ENCODE measurements at regions of chr19 and their contacts with region 1.

Region 1: GRCh38 chr19:54017261-54017660 is 25.8 kb downstream of the CACNG6 start:
- DNase-seq: no peak
- H3K4me3 ChIP-seq: no peak overlapping the region
- H3K27ac ChIP-seq: no peak overlapping the region
- H3K4me1 ChIP-seq: peaks cover 9% of the 10 kb centered on the region
- H3K27me3 ChIP-seq: no peaks in the 10 kb centered on the region
- CTCF ChIP-seq: no peak
- POLR2A ChIP-seq: no peak

Region 2: DNA sequence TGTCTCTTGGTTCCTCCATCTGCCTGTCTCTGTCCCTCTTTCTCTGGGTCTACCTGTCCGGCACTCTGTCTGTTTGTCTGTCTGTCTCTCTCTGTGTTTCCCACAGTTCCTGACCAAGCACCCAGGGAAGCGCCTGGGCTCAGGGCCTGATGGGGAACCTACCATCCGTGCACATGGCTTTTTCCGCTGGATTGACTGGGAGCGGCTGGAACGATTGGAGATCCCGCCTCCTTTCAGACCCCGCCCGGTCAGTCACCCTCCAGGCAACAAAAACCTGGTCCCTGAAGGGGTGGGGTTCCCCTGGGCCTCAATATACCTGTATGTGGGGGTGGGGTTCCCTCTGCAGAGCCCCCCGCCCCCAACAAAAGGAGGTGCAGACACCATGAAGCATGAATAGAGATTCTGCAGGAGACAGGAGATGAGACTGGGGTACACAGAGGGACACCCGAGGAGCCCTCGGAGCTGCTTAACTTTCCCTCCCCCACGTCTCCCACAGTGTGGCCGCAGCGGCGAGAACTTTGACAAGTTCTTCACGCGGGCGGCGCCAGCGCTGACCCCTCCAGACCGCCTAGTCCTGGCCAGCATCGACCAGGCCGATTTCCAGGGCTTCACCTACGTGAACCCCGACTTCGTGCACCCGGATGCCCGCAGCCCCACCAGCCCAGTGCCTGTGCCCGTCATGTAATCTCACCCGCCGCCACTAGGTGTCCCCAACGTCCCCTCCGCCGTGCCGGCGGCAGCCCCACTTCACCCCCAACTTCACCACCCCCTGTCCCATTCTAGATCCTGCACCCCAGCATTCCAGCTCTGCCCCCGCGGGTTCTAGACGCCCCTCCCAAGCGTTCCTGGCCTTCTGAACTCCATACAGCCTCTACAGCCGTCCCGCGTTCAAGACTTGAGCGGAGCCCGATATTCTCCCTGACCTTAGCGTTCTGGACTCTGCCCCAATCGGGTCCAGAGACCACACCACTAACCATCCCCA is 110.8 kb before region 1 on chr19:
- CTCF ChIA-PET with region 1: no interaction called
- POLR2A ChIA-PET with region 1: no interaction called
- dilution Hi-C with region 1: no loop called
- intact Hi-C with region 1: loop called (anchors 1 kb)
- DNase-seq: no peak
- H3K4me3 ChIP-seq: no peak overlapping the region
- H3K27ac ChIP-seq: no peak overlapping the region
- H3K4me1 ChIP-seq: peaks cover 6% of the 10 kb centered on the region
- H3K27me3 ChIP-seq: peaks cover 31 to 35% of the 10 kb centered on the region in 2 experiments
- CTCF ChIP-seq: peak; percentile 77 to 93
- POLR2A ChIP-seq: no peak

Region 3: DNA sequence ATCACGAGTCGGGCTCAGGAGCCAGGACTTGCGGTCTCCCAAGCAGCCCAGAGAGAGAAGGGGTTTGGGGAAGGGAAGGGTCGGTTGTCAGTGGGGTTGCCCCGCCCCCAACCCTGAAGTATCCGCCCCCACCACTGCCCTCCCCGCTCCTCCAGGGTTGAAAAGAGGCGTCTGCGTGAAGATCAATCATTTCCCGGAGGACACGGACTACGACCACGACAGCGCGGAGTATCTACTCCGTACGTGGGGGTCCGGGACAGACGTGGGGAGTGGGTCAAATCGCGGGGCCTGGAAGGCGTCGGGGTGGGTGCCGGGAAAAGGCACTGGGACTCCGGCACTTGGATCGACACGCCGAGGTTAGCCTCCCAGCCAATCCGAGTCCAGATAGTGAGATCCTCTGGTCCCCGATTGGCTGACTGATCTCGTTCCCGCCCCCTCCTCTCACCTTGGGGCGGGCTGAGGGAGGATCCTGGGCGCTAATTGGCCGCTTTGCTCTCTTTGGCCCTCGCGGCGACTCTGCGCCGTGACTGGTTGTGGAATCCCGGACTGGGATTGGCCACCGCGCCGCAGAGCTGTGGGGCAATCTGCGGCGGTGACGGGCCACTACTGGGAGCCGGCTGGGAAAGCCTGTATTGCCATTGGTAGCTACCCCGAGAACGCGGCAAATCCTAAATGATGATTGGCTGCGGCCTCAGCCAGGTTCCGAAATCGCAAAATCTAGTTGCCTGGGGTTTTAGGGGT is 39.1 kb before region 1 on chr19:
- CTCF ChIA-PET with region 1: interaction called, 3 read pairs
- POLR2A ChIA-PET with region 1: no interaction called
- dilution Hi-C with region 1: no loop called
- intact Hi-C with region 1: loop called (anchors 1 kb)
- DNase-seq: peak; percentile 94
- H3K4me3 ChIP-seq: peak overlapping the region in 1 of 3 experiments; percentile 30
- H3K27ac ChIP-seq: no peak overlapping the region
- H3K4me1 ChIP-seq: peaks cover 19% of the 10 kb centered on the region
- H3K27me3 ChIP-seq: no peaks in the 10 kb centered on the region
- CTCF ChIP-seq: no peak
- POLR2A ChIP-seq: no peak

Region 4: DNA sequence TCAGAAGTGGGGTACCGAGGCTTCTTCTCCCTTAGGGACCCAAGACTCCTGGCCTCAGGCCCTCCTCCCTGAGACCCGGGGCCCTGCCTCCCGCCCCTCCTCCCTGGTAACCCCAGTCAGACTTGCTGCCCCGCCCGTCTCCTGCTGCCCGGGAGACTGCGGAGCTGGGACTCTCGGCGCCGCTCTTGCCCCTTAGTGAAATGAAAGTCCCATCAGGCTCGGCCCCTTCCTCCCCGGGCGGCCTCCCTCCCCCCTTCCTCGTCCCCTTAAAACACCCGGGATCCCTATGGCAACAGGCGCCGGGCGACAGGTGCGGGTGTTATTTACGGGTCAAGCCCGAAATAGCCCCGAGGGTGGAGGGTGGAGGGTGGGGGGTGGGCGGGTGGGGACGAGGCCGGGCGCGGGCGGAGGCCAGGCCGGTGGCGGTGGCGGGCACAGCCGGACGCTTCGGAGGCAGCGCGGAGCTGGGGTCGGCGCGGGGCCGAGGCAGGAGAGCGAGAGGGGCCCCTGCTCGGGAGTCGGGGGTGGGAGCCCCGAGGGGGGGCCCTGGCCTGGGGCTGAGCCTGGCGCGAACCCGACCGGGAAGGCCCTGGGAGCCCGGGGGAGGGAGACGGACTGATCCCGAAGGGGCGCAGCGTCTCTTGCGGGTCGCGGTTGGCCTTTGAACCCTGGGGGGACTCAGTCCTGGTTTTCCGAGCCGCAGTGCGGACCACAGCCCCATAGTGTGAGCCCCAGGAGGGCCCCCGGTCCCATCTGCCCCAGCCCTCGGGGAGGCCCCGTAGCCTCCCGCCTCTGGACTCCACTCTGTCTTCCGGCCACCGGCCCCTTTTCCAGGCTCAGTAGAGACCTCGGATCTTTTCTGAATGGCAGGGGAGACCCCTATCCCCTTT is 25.8 kb before region 1 on chr19 and contains the start of gene CACNG6:
- CTCF ChIA-PET with region 1: no interaction called
- POLR2A ChIA-PET with region 1: interaction called, 4 read pairs
- dilution Hi-C with region 1: no loop called
- intact Hi-C with region 1: loop called (anchors 1 kb)
- DNase-seq: peak; percentile 56
- H3K4me3 ChIP-seq: peak within 1 kb of the TSS; percentile 15 to 26 (median 25)
- H3K27ac ChIP-seq: peak within 1 kb of the TSS; percentile 74
- H3K4me1 ChIP-seq: peaks cover 39% of the 10 kb centered on the region
- H3K27me3 ChIP-seq: no peaks in the 10 kb centered on the region
- CTCF ChIP-seq: no peak
- POLR2A ChIP-seq: peak; percentile 38
- total RNA-seq, gene CACNG6: 4.0 and 5.4 TPM in 2 replicates

Region 5: GRCh38 chr19:54035215-54036178 is 18.2 kb after region 1 on chr19:
- CTCF ChIA-PET with region 1: interaction called, 8 read pairs
- POLR2A ChIA-PET with region 1: no interaction called
- dilution Hi-C with region 1: no loop called
- intact Hi-C with region 1: loop called (anchors 1 kb)
- DNase-seq: peak; percentile 86
- H3K4me3 ChIP-seq: no peak overlapping the region
- H3K27ac ChIP-seq: peak overlapping the region; percentile 68
- H3K4me1 ChIP-seq: peaks cover 16% of the 10 kb centered on the region
- H3K27me3 ChIP-seq: no peaks in the 10 kb centered on the region
- CTCF ChIP-seq: no peak
- POLR2A ChIP-seq: no peak

Measured in endothelial cell of umbilical vein (primary cell).